PC-9 (cell line): ENCODE measurements at regions of chr3 and their contacts with region 1.

Region 1: DNA sequence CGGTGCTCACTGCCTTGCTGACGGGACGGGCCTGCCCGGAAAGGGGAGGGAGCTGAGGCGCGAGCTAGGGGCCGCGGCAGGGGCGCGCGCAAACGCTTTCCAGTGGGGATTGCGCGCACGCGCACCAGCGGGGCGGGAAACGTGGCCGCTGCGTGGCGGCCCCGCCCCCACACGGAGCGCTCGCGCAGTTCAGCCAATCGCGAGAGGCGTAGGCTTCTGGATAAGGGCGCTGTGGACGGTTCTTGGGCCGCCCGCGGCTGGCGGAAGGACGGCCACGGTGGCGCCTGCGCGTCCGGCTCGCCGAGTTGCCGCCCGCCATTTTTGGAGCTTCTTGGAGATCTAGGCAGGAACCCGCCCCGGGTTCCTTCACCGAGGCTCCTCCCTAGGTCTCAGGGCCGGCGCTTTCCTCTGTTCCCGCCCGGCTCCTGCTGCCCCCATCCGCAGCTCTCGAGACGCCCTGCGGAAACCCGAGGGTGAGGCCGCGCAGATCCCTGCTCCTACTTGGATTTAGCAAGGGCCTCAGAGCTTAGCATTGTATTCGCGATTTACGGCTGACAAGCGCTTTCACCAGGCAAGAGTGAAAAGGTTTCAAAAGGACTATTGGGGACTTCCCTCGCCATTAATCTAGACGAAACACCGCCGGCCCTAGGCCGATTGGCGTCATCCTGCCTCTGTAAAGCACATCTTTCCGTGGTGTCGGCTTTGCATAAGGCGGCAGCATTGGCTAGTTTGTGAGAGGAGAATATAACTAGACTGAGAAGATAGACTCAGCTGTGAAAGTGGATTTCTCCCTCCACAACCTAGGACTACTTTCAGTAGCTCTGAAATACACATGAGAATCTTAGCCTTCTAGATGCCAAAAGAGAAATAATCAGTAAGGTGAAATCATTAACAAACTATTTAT is 496 bp upstream of the STAG1 start:
- DNase-seq: peak; percentile 91 to 100
- H3K4me3 ChIP-seq: peak overlapping the region; percentile 94
- H3K27ac ChIP-seq: peak overlapping the region; percentile 90
- H3K4me1 ChIP-seq: peaks cover 36% of the 10 kb centered on the region
- H3K27me3 ChIP-seq: no peaks in the 10 kb centered on the region
- CTCF ChIP-seq: no peak

Region 2: DNA sequence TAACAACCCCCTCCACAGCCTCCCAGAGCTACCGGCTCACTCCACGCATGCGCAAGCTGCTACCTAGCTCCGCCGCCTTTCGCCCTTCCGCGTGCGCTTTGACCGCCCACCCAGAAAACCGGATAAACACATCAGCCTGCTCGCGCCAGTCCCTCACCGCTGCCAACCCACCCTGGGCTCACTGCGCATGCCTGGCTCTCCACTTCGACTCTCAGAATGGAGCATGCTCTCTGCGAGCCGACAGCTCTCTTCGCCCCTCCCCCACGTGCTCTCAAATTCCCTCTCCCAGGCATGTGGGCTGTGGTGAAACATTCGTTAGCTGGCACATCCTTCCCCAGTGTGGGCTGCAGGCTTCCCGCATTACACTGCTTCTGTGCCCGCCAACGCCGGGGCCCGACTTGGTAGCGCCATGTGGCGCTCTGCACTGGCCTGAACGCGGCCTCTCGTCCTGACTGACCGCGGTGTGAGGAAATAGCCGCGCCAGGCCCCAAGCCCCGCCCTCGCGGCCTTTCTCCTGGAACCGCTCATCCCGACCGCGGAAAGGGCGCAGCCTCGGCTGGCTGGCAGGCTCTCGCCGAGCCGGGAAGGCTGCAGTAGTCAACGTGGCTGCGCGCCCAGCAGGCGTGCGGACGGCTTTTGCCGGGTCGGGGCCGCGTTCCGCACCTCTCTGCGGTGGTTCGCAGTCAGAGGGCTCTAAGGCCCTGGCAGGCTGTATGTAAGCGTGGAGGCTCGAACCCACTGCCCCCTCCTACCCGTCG is 556.1 kb before region 1 on chr3:
- CTCF ChIA-PET with region 1: interaction called, 4 read pairs
- POLR2A ChIA-PET with region 1: no interaction called
- intact Hi-C with region 1: loop called (anchors 2 kb)
- DNase-seq: peak; percentile 97 to 100
- H3K4me3 ChIP-seq: peak overlapping the region; percentile 84
- H3K27ac ChIP-seq: peak overlapping the region; percentile 95
- H3K4me1 ChIP-seq: peaks cover 30% of the 10 kb centered on the region
- H3K27me3 ChIP-seq: no peaks in the 10 kb centered on the region
- CTCF ChIP-seq: no peak

Region 3: GRCh38 chr3:136350132-136350531 is 402.5 kb before region 1 on chr3:
- CTCF ChIA-PET with region 1: interaction called, 3 read pairs
- POLR2A ChIA-PET with region 1: no interaction called
- intact Hi-C with region 1: loop called (anchors 1 kb)
- DNase-seq: peak; percentile 71 to 77
- H3K4me3 ChIP-seq: no peak overlapping the region
- H3K27ac ChIP-seq: peak overlapping the region; percentile 74
- H3K4me1 ChIP-seq: peaks cover 14% of the 10 kb centered on the region
- H3K27me3 ChIP-seq: no peaks in the 10 kb centered on the region
- CTCF ChIP-seq: no peak

Region 4: DNA sequence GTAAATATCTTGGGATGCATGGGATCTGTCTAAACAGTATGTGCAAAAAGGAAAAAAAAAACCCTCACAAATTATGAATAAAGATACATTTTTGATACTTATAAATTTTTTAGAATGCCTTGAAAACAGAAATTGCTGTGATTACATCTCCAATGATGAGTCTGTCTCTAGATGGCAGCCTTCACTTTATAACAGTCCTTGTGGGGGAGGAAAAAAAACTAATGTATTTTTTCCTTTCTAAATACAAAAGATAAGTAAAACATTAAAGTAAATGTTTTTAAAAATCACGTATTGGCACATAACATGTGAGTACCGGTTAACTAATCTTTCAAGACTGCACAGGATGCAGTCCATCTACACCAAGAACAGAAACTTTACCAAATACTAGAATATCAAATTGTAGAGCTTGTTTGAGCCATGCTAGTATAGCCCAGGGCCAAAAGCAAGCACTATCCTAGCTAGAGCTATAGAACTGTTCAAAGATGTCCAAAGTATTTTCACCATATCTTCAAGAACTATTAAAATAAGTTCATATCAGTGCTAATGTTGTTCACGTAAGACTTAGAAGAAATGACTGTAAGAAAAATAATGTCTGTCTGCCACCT is 206.9 kb before region 1 on chr3:
- CTCF ChIA-PET with region 1: interaction called, 15 read pairs
- POLR2A ChIA-PET with region 1: interaction called, 11 read pairs
- intact Hi-C with region 1: loop called (anchors 1 kb)
- DNase-seq: no peak
- H3K4me3 ChIP-seq: no peak overlapping the region
- H3K27ac ChIP-seq: no peak overlapping the region
- H3K4me1 ChIP-seq: 0 out of 2 replicates have a peak, but pooled peaks cover 4% of the 10 kb centered on the region
- H3K27me3 ChIP-seq: no peaks in the 10 kb centered on the region
- CTCF ChIP-seq: peak; percentile 40; the same call in 1 of the 2 replicates

Region 5: DNA sequence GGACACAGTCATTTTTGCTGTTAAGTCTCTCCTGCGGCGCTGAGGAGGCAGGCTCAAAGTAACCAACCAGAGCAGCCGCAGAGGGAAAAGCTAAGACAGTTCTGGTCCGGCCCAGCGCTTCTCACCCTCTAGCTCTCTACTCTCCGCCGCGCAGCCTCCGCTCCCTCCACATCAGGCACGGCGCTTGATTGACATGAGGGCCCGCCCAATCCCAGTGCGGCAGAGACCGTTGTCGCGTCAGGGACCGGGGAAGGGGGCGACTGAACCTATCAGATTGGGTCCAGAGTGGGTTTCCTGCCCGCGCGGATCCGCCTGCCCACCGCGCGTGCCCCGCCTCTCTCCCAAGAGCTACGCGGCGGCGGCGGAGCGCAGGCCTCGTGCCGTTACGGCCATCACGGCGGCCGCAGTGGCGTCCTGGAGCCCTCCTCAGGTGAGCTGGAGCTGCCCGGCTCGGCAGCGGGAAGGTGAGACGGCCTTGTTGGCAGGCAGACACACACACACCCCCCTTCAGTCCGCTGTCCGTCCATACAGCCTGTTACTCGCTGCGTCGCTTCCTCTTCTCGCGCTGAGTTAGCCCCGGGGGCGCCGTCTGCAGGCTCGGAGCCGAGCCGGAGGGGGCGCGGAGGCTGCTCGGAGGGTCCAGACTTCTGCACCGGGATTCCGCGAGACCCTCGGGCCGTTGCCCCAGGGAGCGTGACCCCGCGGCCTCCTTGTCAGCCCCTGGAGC is 109.4 kb after region 1 on chr3 and contains the start of gene NCK1:
- CTCF ChIA-PET with region 1: interaction called, 23 read pairs
- POLR2A ChIA-PET with region 1: interaction called, 25 read pairs
- intact Hi-C with region 1: loop called (anchors 1 kb)
- DNase-seq: peak; percentile 92 to 99
- H3K4me3 ChIP-seq: peak within 1 kb of the TSS; percentile 86
- H3K27ac ChIP-seq: peak within 1 kb of the TSS; percentile 82
- H3K4me1 ChIP-seq: peaks cover 20% of the 10 kb centered on the region
- H3K27me3 ChIP-seq: no peaks in the 10 kb centered on the region
- CTCF ChIP-seq: no peak
- total RNA-seq, gene NCK1: 42.7 and 71.4 TPM in 2 replicates

Region 6: DNA sequence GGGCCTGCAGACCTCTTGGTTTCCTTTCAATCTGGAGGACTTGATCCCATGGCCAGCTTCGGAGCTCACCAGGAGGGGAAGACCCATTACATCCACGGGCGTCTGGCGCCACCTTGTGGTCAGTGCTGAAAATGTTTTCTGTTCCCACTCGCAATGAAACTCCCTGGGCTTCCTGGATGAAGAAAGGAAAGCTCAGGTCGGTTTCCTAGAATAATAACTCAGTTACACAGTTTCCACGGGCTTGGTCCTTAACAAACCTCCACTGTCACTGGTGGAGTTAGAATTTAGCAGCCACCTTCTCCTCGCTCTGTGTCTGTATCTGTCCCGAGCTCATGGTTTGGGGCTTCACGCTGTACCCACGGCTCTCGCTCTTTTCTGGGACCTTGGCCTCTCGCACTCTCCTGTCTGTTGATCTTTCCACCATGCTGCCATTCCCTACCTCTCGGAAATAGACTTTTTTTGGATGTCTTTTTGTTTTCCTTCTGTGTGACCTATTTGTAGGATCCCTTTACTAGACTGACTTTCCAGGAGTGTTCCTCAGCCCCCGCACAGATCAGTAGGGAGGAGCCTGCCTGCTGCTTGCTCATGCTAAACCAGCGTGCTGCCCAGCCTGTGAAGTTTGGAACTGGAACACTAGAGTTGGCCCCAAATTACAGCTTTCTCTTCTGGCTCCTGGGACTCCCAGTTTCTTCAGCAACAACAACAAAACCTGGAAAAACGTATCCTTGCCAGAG is 261.4 kb after region 1 on chr3:
- CTCF ChIA-PET with region 1: interaction called, 47 read pairs
- POLR2A ChIA-PET with region 1: no interaction called
- intact Hi-C with region 1: loop called (anchors 1 kb)
- DNase-seq: peak; percentile 66 to 88
- H3K4me3 ChIP-seq: no peak overlapping the region
- H3K27ac ChIP-seq: no peak overlapping the region
- H3K4me1 ChIP-seq: no peaks in the 10 kb centered on the region
- H3K27me3 ChIP-seq: no peaks in the 10 kb centered on the region
- CTCF ChIP-seq: peak; percentile 93